HCT116 (cell line): ENCODE measurements at regions of chr4 and their contacts with region 1.

Region 1: DNA sequence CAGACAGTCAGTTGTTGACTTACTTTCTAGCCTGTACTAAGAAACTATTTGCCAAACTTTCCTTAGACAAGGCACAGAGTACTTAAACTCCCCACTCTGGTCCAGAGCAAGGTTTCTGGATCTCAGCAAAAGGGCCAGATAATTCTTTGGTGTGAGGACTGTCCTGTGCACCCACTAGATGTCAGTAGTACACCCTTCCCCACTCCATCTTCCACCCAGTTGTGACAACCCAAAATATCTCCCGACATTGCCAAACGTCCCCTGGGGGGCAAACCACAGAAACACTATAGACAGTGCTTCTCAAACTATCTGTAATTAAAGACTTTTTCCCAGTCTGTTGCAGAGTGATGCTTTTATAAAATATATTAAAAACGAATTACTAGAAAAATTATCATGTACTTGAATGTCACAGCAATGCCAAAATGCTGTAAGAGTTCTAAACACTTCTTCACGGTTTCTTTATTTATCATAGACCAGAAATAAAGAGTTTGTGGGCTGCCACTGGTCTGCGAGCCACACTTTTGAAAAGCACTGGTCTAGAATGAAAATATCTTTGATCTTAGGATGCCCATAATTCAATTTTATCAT is 203.5 kb downstream of the PRDM5 start:
- DNase-seq: peak; percentile 16
- ATAC-seq: peak; percentile 97
- H3K4me3 ChIP-seq: no peak overlapping the region
- H3K27ac ChIP-seq: no peak overlapping the region
- H3K4me1 ChIP-seq: no peaks in the 10 kb centered on the region
- H3K27me3 ChIP-seq: no peaks in the 10 kb centered on the region
- CTCF ChIP-seq: peak; percentile 53 to 73 (median 71); a peak in 5 of 6 replicates
- POLR2A ChIP-seq: no peak
- RAD21 ChIP-seq: peak; percentile 67

Region 2: GRCh38 chr4:120071192-120071795 is 647.8 kb before region 1 on chr4:
- CTCF ChIA-PET with region 1: no interaction called
- POLR2A ChIA-PET with region 1: no interaction called
- RAD21 ChIA-PET with region 1: no interaction called
- intact Hi-C with region 1: loop called (anchors 5 kb)
- DNase-seq: peak; percentile 57
- ATAC-seq: no peak
- H3K4me3 ChIP-seq: no peak overlapping the region
- H3K27ac ChIP-seq: no peak overlapping the region
- H3K4me1 ChIP-seq: peaks cover 2 to 8% of the 10 kb centered on the region in 2 experiments; a peak in 2 of 4 replicates
- H3K27me3 ChIP-seq: no peaks in the 10 kb centered on the region
- CTCF ChIP-seq: peak; percentile 38 to 70 (median 48); a peak in 4 of 6 replicates
- POLR2A ChIP-seq: no peak
- RAD21 ChIP-seq: peak; percentile 79

Region 3: DNA sequence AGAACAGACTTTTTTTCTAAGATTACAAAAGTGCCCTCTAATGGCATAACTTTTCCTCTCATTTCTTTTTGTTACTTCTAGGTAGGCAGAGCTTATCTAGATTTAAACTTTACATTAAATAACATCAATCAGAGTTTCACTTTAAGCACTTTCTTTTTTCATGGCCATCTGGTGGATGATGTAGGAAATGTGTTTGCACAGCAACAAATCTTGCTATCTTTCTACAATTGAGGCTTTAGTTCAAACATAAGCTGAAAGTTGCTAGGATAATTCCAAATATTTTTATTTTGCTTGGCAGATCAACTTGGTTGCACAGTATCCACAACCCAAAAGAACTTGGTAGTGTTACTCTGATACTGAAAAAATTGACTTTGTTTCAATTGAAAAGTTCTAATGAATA is 331.2 kb after region 1 on chr4:
- CTCF ChIA-PET with region 1: no interaction called
- POLR2A ChIA-PET with region 1: no interaction called
- RAD21 ChIA-PET with region 1: no interaction called
- intact Hi-C with region 1: loop called (anchors 2 kb)
- DNase-seq: no peak
- ATAC-seq: no peak
- H3K4me3 ChIP-seq: no peak overlapping the region
- H3K27ac ChIP-seq: no peak overlapping the region
- H3K4me1 ChIP-seq: peaks cover 0 to 5% of the 10 kb centered on the region in 2 experiments; a peak in 1 of 4 replicates
- H3K27me3 ChIP-seq: no peaks in the 10 kb centered on the region
- CTCF ChIP-seq: peak; percentile 22 to 51 (median 29); a peak in 5 of 6 replicates
- POLR2A ChIP-seq: no peak
- RAD21 ChIP-seq: 0 out of 2 replicates have a peak, but pooled peaks have one; percentile 20

Region 4: DNA sequence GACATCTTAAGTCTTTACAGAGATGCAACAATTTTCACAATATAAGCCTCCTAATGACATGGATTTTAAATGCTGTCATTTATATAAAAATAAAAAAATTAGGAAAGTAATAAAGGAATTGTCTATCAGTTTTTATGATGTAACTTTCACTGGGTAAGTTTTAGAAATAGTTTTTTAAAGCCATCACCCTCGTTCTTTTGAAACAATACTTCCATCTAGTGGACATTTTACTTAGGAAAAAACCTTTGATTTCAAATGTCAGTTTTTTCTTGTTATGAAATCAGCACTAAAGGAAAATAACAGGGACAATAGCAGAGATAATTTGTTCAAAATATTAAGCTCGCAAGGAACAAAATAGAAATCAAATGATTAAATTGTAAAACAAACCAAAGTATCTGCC is 377.6 kb after region 1 on chr4:
- CTCF ChIA-PET with region 1: no interaction called
- POLR2A ChIA-PET with region 1: no interaction called
- RAD21 ChIA-PET with region 1: no interaction called
- intact Hi-C with region 1: loop called (anchors 1 kb)
- DNase-seq: peak; percentile 24
- ATAC-seq: no peak
- H3K4me3 ChIP-seq: no peak overlapping the region
- H3K27ac ChIP-seq: no peak overlapping the region
- H3K4me1 ChIP-seq: no peaks in the 10 kb centered on the region
- H3K27me3 ChIP-seq: no peaks in the 10 kb centered on the region
- CTCF ChIP-seq: peak; percentile 21 to 59 (median 57); a peak in 4 of 6 replicates
- POLR2A ChIP-seq: no peak
- RAD21 ChIP-seq: peak; percentile 80